ENCODE measurements at regions of chr1 and their contacts with region 1.

Region 1: GRCh38 chr1:160522622-160523345 is at the start of gene SLAMF6:
- DNase-seq: peak; percentile 55
- H3K4me3 Mint-ChIP-seq: peak within 1 kb of the TSS; percentile 84
- H3K27ac Mint-ChIP-seq: peak within 1 kb of the TSS; percentile 93
- H3K4me1 Mint-ChIP-seq: peaks cover 64% of the 10 kb centered on the region
- H3K27me3 Mint-ChIP-seq: no peaks in the 10 kb centered on the region
- total RNA-seq, gene SLAMF6: 32.0 to 33.8 TPM

Region 2: GRCh38 chr1:160489513-160490261 is 33.1 kb before region 1 on chr1:
- CTCF ChIA-PET with region 1: no interaction called
- POLR2A ChIA-PET with region 1: no interaction called
- DNase-seq: no peak
- H3K4me3 Mint-ChIP-seq: no peak overlapping the region
- H3K27ac Mint-ChIP-seq: no peak overlapping the region
- H3K4me1 Mint-ChIP-seq: no peaks in the 10 kb centered on the region
- H3K27me3 Mint-ChIP-seq: no peaks in the 10 kb centered on the region

Region 3: GRCh38 chr1:160567858-160568682 is 45.3 kb after region 1 on chr1:
- CTCF ChIA-PET with region 1: interaction called, 3 read pairs
- POLR2A ChIA-PET with region 1: interaction called, 17 read pairs
- DNase-seq: peak; percentile 72
- H3K4me3 Mint-ChIP-seq: peak overlapping the region; percentile 58
- H3K27ac Mint-ChIP-seq: peak overlapping the region; percentile 97
- H3K4me1 Mint-ChIP-seq: peaks cover 77% of the 10 kb centered on the region
- H3K27me3 Mint-ChIP-seq: no peaks in the 10 kb centered on the region